ENCODE measurements at regions of chr21 and their contacts with region 1.

Region 1: DNA sequence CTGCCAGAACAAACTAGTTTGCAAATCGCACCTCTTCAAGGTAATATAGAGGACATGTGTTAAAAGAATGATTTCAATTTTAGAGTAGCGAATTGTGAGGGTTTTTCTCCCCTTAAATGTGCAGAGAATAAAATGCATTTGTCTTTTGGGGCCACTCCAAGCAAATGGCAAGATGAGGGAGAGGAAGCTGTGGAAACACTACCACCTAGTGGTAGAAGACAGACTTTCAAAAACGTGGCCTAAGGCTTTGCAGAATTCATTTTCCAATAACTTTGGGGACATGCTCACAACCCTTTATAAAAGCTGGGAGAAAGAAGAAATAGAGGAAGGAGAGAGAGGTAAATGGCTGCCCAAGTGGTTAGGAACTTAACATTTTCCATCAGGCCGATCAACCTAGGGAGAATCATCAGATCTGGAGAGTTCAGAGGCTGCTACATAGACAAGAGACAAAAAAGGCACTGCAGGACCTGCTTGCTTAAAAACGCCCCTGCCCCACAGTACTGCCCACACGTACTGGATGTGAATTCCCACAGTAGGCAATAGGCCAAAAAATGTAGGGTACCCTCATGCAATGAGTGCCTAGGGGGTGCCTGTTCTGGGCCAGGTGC is 15.7 kb upstream of the RCAN1 start:
- DNase-seq: peak in 13 of 35 experiments; percentile 5 to 77 (median 20)
- ATAC-seq: peak; percentile 48 to 75 (median 64)
- H3K4me3 ChIP-seq: no peak overlapping the region
- H3K4me3 Mint-ChIP-seq: no peak overlapping the region
- H3K27ac ChIP-seq: no peak overlapping the region
- H3K27ac Mint-ChIP-seq: no peak overlapping the region
- H3K4me1 ChIP-seq: no peaks in the 10 kb centered on the region
- H3K4me1 Mint-ChIP-seq: no peaks in the 10 kb centered on the region
- H3K27me3 ChIP-seq: peaks cover 0 to 24% of the 10 kb centered on the region in 2 experiments
- H3K27me3 Mint-ChIP-seq: peaks cover 17 to 18% of the 10 kb centered on the region in 2 donors

Region 2: DNA sequence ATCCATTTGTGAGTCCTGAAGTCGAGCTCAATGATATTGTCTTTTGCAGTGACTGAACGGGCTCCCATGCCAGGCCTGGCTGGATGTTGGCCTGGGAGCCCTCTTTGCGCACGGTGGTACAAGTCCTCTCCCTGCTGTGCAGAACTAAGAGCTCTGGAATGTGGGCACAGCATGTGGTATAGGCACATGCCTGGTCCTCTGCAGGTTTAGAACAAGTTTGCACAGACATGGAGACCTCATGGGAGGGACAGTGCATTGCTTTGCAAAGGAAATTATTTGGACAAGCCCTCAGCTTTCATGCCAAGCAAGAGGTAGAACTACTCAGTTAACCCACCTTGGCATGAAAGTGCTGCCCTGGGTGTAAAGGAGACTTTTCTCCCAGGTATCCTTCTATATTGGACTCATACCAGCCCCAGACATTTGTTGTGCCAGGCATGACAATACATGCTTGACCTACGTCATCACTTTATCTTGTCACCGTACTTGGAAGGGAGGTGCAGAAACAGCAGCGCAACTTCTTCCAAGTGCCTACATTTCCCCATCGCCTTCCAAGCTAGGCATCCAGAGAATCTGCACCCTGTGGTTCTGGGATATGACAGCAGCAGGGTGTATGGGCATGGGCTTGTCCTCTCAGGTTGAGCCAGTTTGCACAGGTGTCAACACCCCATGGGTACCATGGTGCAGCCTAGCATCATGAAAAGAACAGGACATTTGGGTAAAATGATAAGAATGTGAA is 594.9 kb before region 1 on chr21:
- CTCF ChIA-PET with region 1: interaction called in 1 of 2 experiments, 13 read pairs
- POLR2A ChIA-PET with region 1: no interaction called
- DNase-seq: no peak
- ATAC-seq: no peak
- H3K4me3 ChIP-seq: no peak overlapping the region
- H3K4me3 Mint-ChIP-seq: no peak overlapping the region
- H3K27ac ChIP-seq: no peak overlapping the region
- H3K27ac Mint-ChIP-seq: no peak overlapping the region
- H3K4me1 ChIP-seq: no peaks in the 10 kb centered on the region
- H3K4me1 Mint-ChIP-seq: peaks cover 0 to 6% (median 3%) of the 10 kb centered on the region in 3 donors
- H3K27me3 ChIP-seq: no peaks in the 10 kb centered on the region
- H3K27me3 Mint-ChIP-seq: no peaks in the 10 kb centered on the region

Region 3: DNA sequence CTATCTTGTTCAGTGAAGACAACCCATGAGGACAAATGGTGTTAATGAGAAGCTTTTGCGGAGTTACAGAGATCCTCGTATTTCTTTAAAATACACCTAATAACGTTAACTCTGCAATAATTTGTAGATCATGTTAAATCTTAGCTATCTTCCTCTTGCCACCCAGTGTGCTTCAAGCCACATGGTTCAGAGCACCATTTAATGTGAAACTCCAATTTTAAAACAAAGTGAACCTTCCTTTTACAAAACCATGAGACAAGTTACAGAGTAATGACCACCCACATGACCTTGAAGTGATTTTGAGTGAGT is 268.6 kb before region 1 on chr21:
- CTCF ChIA-PET with region 1: interaction called, 3 to 12 read pairs
- POLR2A ChIA-PET with region 1: no interaction called
- DNase-seq: no peak
- ATAC-seq: peak in 3 of 4 experiments; percentile 17 to 35 (median 33)
- H3K4me3 ChIP-seq: no peak overlapping the region
- H3K4me3 Mint-ChIP-seq: peak overlapping the region in 1 of 3 donors; percentile 15
- H3K27ac ChIP-seq: no peak overlapping the region
- H3K27ac Mint-ChIP-seq: no peak overlapping the region
- H3K4me1 ChIP-seq: peaks cover 0 to 3% of the 10 kb centered on the region in 2 experiments
- H3K4me1 Mint-ChIP-seq: peaks cover 5 to 8% (median 6%) of the 10 kb centered on the region in 3 donors
- H3K27me3 ChIP-seq: peaks cover 0 to 15% of the 10 kb centered on the region in 2 experiments
- H3K27me3 Mint-ChIP-seq: peaks cover 7 to 16% of the 10 kb centered on the region in 2 donors

Region 4: DNA sequence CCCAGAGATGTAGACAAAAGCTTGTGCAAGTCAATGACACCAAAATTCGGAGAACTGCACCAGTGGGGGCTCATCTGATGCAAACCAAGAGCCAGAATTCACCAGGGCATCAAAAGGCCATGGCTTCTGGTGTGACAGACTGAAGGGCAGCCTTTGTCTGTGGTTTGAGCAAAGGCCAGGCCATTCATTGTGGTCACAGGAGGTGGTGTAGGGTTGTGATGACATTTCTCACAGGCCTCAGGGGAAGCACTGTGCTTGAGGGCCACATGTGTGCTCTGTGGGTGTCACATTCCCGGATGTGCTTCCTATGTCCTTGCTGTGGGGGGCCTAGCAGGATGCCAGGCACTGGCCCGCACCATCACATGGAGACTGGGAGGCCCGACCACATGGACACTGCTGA is 96.1 kb before region 1 on chr21:
- CTCF ChIA-PET with region 1: no interaction called
- POLR2A ChIA-PET with region 1: no interaction called
- DNase-seq: peak in 1 of 35 experiments; percentile 14
- ATAC-seq: no peak
- H3K4me3 ChIP-seq: no peak overlapping the region
- H3K4me3 Mint-ChIP-seq: no peak overlapping the region
- H3K27ac ChIP-seq: no peak overlapping the region
- H3K27ac Mint-ChIP-seq: no peak overlapping the region
- H3K4me1 ChIP-seq: peaks cover 0 to 7% of the 10 kb centered on the region in 2 experiments
- H3K4me1 Mint-ChIP-seq: peaks cover 0 to 2% (median 0%) of the 10 kb centered on the region in 3 donors
- H3K27me3 ChIP-seq: no peaks in the 10 kb centered on the region
- H3K27me3 Mint-ChIP-seq: no peaks in the 10 kb centered on the region

Region 5: GRCh38 chr21:34618941-34619340 is 11.7 kb before region 1 on chr21:
- CTCF ChIA-PET with region 1: interaction called in 1 of 2 experiments, 5 read pairs
- POLR2A ChIA-PET with region 1: interaction called, 3 to 12 read pairs
- DNase-seq: no peak
- ATAC-seq: no peak
- H3K4me3 ChIP-seq: no peak overlapping the region
- H3K4me3 Mint-ChIP-seq: no peak overlapping the region
- H3K27ac ChIP-seq: no peak overlapping the region
- H3K27ac Mint-ChIP-seq: no peak overlapping the region
- H3K4me1 ChIP-seq: peaks cover 5 to 8% of the 10 kb centered on the region in 2 experiments
- H3K4me1 Mint-ChIP-seq: peaks cover 5 to 9% (median 9%) of the 10 kb centered on the region in 3 donors
- H3K27me3 ChIP-seq: peaks cover 0 to 25% of the 10 kb centered on the region in 2 experiments
- H3K27me3 Mint-ChIP-seq: peaks cover 19 to 27% of the 10 kb centered on the region in 2 donors